Activated T-helper 1 cell treated with anti-CD3 and anti-CD28 coated beads, Interleukin-12 subunit alpha, Interleukin-12 subunit beta, Interleukin-2, Interleukin-4 antibody, amounts not matched to agents 30 ng/mL and 10 ng/mL and 1 ng/mL, durations not matched to agents 14 hours and 24 hours and 36 hours (primary cell): ENCODE measurements at regions of chr1 and their contacts with region 1.

Region 1: DNA sequence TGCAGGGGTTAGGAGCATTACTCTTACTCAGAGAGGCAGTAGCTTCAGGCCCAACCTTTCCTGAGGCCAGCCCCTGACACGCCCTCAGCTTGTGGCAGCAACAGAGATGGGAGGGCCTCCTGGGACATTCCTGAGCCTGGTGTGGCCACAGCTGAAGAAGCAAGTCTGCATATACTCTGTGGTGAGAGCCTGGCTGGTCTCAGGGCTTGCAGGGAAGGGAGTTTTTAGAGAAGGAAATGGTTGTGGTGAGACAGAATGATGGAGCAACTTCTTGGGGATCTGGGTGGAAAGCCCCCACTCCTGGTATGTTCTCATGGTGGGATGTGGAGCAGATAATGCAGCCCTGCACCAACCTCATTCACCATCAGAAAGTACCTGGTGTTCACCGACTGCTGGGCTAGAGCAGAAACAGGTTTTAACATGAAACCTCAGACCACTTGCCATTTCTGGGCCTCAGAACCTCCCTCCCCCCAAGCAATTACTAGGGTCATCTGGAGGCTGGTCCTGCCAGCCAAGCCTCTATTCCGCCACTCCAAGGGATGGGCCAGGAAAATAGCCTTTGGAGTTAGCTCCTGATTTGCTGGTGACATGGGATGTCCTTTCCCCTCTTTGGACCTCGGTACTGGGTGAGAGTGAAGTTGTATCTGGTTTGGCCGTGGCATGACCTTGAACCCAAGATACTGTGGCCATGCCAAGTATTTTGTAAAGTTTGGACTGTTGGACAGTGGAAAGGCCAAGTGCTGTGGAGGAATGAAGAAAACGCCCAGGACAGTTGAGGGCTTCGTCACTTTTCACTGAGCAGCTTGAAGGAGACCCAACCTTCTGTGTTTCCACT is 28.1 kb upstream of the RNF19B start:
- DNase-seq: peak; percentile 81
- H3K4me3 Mint-ChIP-seq: peak overlapping the region; percentile 31
- H3K27ac Mint-ChIP-seq: peak overlapping the region; percentile 87
- H3K4me1 Mint-ChIP-seq: peaks cover 83% of the 10 kb centered on the region
- H3K27me3 Mint-ChIP-seq: no peaks in the 10 kb centered on the region

Region 2: GRCh38 chr1:32859915-32860314 is 132.8 kb before region 1 on chr1:
- intact Hi-C with region 1: no loop called
- DNase-seq: no peak
- H3K4me3 Mint-ChIP-seq: no peak overlapping the region
- H3K27ac Mint-ChIP-seq: no peak overlapping the region
- H3K4me1 Mint-ChIP-seq: no peaks in the 10 kb centered on the region
- H3K27me3 Mint-ChIP-seq: no peaks in the 10 kb centered on the region

Region 3: GRCh38 chr1:32900951-32901822 is 91.5 kb before region 1 on chr1 and contains the start of gene TMEM54:
- intact Hi-C with region 1: no loop called
- DNase-seq: no peak
- H3K4me3 Mint-ChIP-seq: peak within 1 kb of the TSS; percentile 78
- H3K27ac Mint-ChIP-seq: peak within 1 kb of the TSS; percentile 18
- H3K4me1 Mint-ChIP-seq: peaks cover 5% of the 10 kb centered on the region
- H3K27me3 Mint-ChIP-seq: peaks cover 56% of the 10 kb centered on the region
- total RNA-seq, gene TMEM54: 0.78 and 1.0 TPM in 2 replicates

Region 4: GRCh38 chr1:33036526-33037503 is 44.1 kb after region 1 on chr1 and contains the start of gene AK2:
- intact Hi-C with region 1: loop called (anchors 1 kb)
- DNase-seq: peak; percentile 91
- H3K4me3 Mint-ChIP-seq: peak within 1 kb of the TSS; percentile 91
- H3K27ac Mint-ChIP-seq: peak within 1 kb of the TSS; percentile 90
- H3K4me1 Mint-ChIP-seq: peaks cover 48% of the 10 kb centered on the region
- H3K27me3 Mint-ChIP-seq: no peaks in the 10 kb centered on the region
- total RNA-seq, gene AK2: 387 and 400 TPM in 2 replicates